ENCODE measurements at regions of chr9 and their contacts with region 1.

Region 1: GRCh38 chr9:33628865-33629410 is 104.9 kb downstream of the ANKRD18B start:
- DNase-seq: no peak
- H3K4me3 ChIP-seq: no peak overlapping the region
- H3K27ac ChIP-seq: no peak overlapping the region
- H3K4me1 ChIP-seq: no peaks in the 10 kb centered on the region
- H3K27me3 ChIP-seq: no peaks in the 10 kb centered on the region
- CTCF ChIP-seq: no peak
- EP300 ChIP-seq: no peak
- POLR2A ChIP-seq: no peak
- RAD21 ChIP-seq: no peak

Region 2: GRCh38 chr9:33649463-33649862 is 20.5 kb after region 1 on chr9:
- CTCF ChIA-PET with region 1: interaction called, 14 read pairs
- POLR2A ChIA-PET with region 1: no interaction called
- DNase-seq: no peak
- H3K4me3 ChIP-seq: no peak overlapping the region
- H3K27ac ChIP-seq: no peak overlapping the region
- H3K4me1 ChIP-seq: no peaks in the 10 kb centered on the region
- H3K27me3 ChIP-seq: no peaks in the 10 kb centered on the region
- CTCF ChIP-seq: no peak
- EP300 ChIP-seq: no peak
- POLR2A ChIP-seq: no peak
- RAD21 ChIP-seq: no peak

Region 3: GRCh38 chr9:33835625-33836260 is 206.8 kb after region 1 on chr9:
- CTCF ChIA-PET with region 1: no interaction called
- POLR2A ChIA-PET with region 1: no interaction called
- DNase-seq: no peak
- H3K4me3 ChIP-seq: no peak overlapping the region
- H3K27ac ChIP-seq: no peak overlapping the region
- H3K4me1 ChIP-seq: no peaks in the 10 kb centered on the region
- H3K27me3 ChIP-seq: no peaks in the 10 kb centered on the region
- CTCF ChIP-seq: no peak
- EP300 ChIP-seq: no peak
- POLR2A ChIP-seq: no peak
- RAD21 ChIP-seq: no peak

Measured in H1 (cell line).